Naive thymus-derived CD4-positive, alpha-beta T cell (primary cell): ENCODE measurements at regions of chr9 and their contacts with region 1.

Region 1: DNA sequence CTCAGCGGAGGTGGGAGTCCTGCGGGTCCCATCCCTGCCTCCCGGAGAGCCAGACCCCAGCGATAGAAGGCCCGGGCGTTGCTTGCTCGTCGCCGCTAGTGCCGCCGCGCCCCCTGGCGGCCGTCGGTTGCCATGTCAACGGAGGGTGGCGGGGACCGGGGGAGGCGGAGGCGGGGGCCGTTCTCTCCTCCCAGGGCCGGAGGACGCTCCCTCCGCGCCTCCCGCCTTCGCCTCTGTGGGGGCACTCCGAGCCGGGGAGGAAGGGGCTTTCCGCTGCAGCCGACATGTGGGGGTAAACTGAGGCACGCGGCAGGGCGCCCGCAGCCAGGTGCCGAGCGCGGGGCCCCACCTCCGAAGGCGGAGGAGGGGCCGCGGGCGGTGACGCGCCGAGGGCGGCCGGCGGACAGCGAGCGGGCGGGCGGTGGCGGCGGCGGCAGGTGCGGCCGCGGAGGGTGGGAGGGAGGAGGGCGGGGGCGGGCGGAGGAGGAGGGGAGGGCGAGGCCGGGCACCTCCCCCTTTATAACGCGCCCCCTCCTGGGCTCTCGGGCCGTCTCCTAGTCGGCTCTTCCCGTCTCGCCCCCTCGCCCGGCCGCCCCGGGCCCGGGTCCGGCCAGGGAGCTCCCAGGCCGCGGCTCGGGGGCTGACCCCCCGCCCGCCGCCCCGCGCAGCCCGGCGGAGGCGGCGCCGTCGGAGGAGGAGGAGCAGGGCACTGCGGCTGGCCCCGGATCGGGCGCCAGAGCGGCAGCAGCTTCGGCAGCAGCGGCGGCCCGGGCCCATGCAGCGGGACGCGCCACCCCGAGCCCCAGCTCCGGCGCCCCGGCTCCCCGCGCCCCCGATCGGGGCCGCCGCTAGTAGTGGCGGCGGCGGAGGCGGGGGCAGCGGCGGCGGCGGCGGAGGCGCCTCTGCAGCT is 556 bp upstream of the CDK9 start:
- DNase-seq: peak; percentile 82 to 93 (median 90)
- ATAC-seq: peak; percentile 65
- H3K4me3 ChIP-seq: peak overlapping the region; percentile 53
- H3K4me3 Mint-ChIP-seq: peak overlapping the region; percentile 82 to 95 (median 92)
- H3K27ac ChIP-seq: peak overlapping the region; percentile 90
- H3K27ac Mint-ChIP-seq: peak overlapping the region; percentile 91 to 98 (median 96)
- H3K4me1 ChIP-seq: peaks cover 56 to 59% of the 10 kb centered on the region in 2 donors
- H3K4me1 Mint-ChIP-seq: peaks cover 34 to 75% (median 61%) of the 10 kb centered on the region in 7 donors
- H3K27me3 ChIP-seq: no peaks in the 10 kb centered on the region
- H3K27me3 Mint-ChIP-seq: no peaks in the 10 kb centered on the region

Region 2: GRCh38 chr9:127578955-127579853 is 206.1 kb before region 1 on chr9:
- CTCF ChIA-PET with region 1: no interaction called
- POLR2A ChIA-PET with region 1: no interaction called
- intact Hi-C with region 1: loop called in 1 of 2 experiments (anchors 5 kb)
- DNase-seq: peak in 2 of 9 donors; percentile 43 to 76
- ATAC-seq: peak; percentile 95
- H3K4me3 ChIP-seq: no peak overlapping the region
- H3K4me3 Mint-ChIP-seq: peak overlapping the region in 3 of 10 donors; percentile 24 to 83 (median 44)
- H3K27ac ChIP-seq: no peak overlapping the region
- H3K27ac Mint-ChIP-seq: peak overlapping the region in 3 of 9 donors; percentile 26 to 89 (median 61)
- H3K4me1 ChIP-seq: peaks cover 4 to 7% of the 10 kb centered on the region in 2 donors
- H3K4me1 Mint-ChIP-seq: peaks cover 8 to 54% (median 10%) of the 10 kb centered on the region in 7 donors
- H3K27me3 ChIP-seq: no peaks in the 10 kb centered on the region
- H3K27me3 Mint-ChIP-seq: no peaks in the 10 kb centered on the region

Region 3: GRCh38 chr9:127715394-127716337 is 69.6 kb before region 1 on chr9 and contains the starts of genes PTRH1 and TTC16:
- CTCF ChIA-PET with region 1: no interaction called
- POLR2A ChIA-PET with region 1: interaction called, 4 read pairs
- intact Hi-C with region 1: loop called (anchors 1 kb)
- DNase-seq: peak; percentile 91 to 98 (median 96)
- ATAC-seq: peak; percentile 96
- H3K4me3 ChIP-seq: peak within 1 kb of the TSS; percentile 85
- H3K4me3 Mint-ChIP-seq: peak within 1 kb of the TSS; percentile 93 to 100 (median 98)
- H3K27ac ChIP-seq: peak within 1 kb of the TSS; percentile 89
- H3K27ac Mint-ChIP-seq: peak within 1 kb of the TSS; percentile 86 to 99 (median 97)
- H3K4me1 ChIP-seq: peaks cover 31 to 32% of the 10 kb centered on the region in 2 donors
- H3K4me1 Mint-ChIP-seq: peaks cover 28 to 47% (median 30%) of the 10 kb centered on the region in 7 donors
- H3K27me3 ChIP-seq: no peaks in the 10 kb centered on the region
- H3K27me3 Mint-ChIP-seq: no peaks in the 10 kb centered on the region
- total RNA-seq, gene PTRH1: 7.8 to 9.5 (median 8.6) TPM
- total RNA-seq, gene TTC16: 0.29 to 9.9 (median 4.6) TPM

Region 4: DNA sequence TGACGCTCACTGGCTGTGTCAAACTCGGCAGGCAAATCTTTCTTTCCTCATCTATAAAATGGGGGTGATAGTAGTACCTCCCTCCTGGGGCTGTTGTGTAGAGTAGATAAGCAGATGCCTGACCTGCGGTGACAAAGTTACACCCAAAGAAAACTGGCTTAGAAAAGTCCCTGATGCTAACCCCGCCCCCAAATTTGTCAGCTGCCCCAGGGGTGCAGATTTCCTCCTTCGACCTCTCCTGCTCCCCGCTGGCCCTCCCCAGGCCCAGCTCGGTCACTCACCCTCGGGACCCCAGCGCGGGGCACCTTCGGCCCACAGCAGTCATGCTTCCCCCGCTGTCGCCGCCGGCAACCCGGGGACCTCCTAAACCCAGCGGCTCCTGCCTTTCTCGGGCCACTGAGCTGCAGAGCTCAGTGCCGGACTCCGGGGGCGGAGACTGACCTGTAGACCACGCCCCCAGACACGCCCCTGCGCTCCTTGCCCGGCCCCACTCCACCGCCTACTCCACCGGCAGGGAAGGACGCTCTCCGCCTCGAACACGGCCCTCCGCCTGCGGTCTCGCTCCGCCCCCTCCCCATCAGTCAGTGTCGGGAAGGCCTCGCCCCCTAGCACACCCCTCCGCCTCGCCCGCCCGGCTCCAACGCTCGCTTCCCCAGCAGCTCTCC is 14.2 kb before region 1 on chr9:
- CTCF ChIA-PET with region 1: interaction called, 14 read pairs
- POLR2A ChIA-PET with region 1: interaction called, 99 read pairs
- intact Hi-C with region 1: loop called (anchors 1 kb)
- DNase-seq: peak; percentile 85 to 99 (median 92)
- ATAC-seq: peak; percentile 92
- H3K4me3 ChIP-seq: peak overlapping the region; percentile 71
- H3K4me3 Mint-ChIP-seq: peak overlapping the region; percentile 74 to 92 (median 86)
- H3K27ac ChIP-seq: peak overlapping the region; percentile 90
- H3K27ac Mint-ChIP-seq: peak overlapping the region; percentile 90 to 96 (median 94)
- H3K4me1 ChIP-seq: peaks cover 57 to 59% of the 10 kb centered on the region in 2 donors
- H3K4me1 Mint-ChIP-seq: peaks cover 44 to 82% (median 71%) of the 10 kb centered on the region in 7 donors
- H3K27me3 ChIP-seq: no peaks in the 10 kb centered on the region
- H3K27me3 Mint-ChIP-seq: no peaks in the 10 kb centered on the region

Region 5: GRCh38 chr9:127869310-127870152 is 84.3 kb after region 1 on chr9:
- CTCF ChIA-PET with region 1: interaction called, 14 read pairs
- POLR2A ChIA-PET with region 1: interaction called, 7 read pairs
- intact Hi-C with region 1: loop called (anchors 1 to 2 kb)
- DNase-seq: peak; percentile 44 to 91 (median 62)
- ATAC-seq: peak; percentile 85
- H3K4me3 ChIP-seq: no peak overlapping the region
- H3K4me3 Mint-ChIP-seq: no peak overlapping the region
- H3K27ac ChIP-seq: no peak overlapping the region
- H3K27ac Mint-ChIP-seq: peak overlapping the region in 1 of 9 donors; percentile 32
- H3K4me1 ChIP-seq: peaks cover 12 to 13% of the 10 kb centered on the region in 2 donors
- H3K4me1 Mint-ChIP-seq: peaks cover 12 to 19% (median 16%) of the 10 kb centered on the region in 7 donors
- H3K27me3 ChIP-seq: no peaks in the 10 kb centered on the region
- H3K27me3 Mint-ChIP-seq: no peaks in the 10 kb centered on the region

Region 6: DNA sequence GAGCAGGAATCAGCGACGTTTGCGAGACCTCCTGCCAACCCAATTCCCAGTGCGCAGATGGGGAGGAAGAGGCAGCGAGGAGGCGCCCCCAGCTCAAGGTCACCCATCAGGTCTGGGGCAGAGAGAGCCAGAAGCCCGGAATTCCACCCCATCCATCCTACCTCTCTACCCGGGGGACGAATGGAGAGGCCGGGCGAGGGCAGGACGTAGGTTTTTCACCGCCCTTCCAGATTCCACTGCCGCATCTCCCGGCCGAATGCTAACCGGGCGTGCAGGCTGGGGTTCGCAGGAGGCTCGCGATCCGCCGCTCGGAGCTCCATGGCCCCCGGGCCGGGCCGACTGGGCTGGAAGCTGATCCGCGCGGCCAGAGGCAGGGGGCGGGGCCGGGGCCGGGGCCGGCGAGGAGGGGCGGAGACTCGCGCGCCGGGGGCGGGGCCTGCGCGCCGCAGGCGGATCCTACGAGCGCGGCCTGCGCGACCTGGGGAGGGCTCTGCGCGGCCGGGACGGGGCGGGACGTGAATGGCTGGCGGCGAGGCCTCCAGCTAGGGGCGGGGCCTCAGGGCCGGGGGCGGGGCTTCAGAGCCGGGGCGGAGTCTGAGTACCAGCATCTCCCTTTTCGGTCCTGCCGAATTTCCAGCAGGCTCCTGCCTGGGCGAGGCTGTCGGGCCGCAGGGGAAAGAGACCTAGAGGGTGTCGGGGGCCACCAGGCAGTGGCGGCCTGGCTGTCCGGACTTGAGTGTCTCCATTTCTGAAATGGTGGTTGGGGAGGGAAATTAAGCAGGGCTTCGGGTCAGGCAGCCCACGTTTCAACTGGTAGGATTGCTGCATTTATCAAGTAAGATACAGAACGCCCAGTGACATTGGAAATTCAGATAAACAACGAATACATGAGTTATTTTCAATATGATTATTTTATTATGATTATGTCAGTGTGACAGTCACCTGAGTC is 131.7 kb after region 1 on chr9 and contains the start of gene ST6GALNAC4:
- CTCF ChIA-PET with region 1: interaction called, 7 read pairs
- POLR2A ChIA-PET with region 1: interaction called, 19 read pairs
- intact Hi-C with region 1: loop called (anchors 1 kb)
- DNase-seq: peak; percentile 82 to 97 (median 89)
- ATAC-seq: peak; percentile 98
- H3K4me3 ChIP-seq: peak within 1 kb of the TSS; percentile 86
- H3K4me3 Mint-ChIP-seq: peak within 1 kb of the TSS; percentile 76 to 91 (median 86)
- H3K27ac ChIP-seq: peak within 1 kb of the TSS; percentile 81
- H3K27ac Mint-ChIP-seq: peak within 1 kb of the TSS; percentile 69 to 95 (median 87)
- H3K4me1 ChIP-seq: peaks cover 28 to 39% of the 10 kb centered on the region in 2 donors
- H3K4me1 Mint-ChIP-seq: peaks cover 29 to 64% (median 51%) of the 10 kb centered on the region in 7 donors
- H3K27me3 ChIP-seq: no peaks in the 10 kb centered on the region
- H3K27me3 Mint-ChIP-seq: peaks cover 0 to under 1% (median 0%) of the 10 kb centered on the region in 5 donors
- total RNA-seq, gene ST6GALNAC4: 28.0 to 51.0 (median 36.1) TPM

Region 7: DNA sequence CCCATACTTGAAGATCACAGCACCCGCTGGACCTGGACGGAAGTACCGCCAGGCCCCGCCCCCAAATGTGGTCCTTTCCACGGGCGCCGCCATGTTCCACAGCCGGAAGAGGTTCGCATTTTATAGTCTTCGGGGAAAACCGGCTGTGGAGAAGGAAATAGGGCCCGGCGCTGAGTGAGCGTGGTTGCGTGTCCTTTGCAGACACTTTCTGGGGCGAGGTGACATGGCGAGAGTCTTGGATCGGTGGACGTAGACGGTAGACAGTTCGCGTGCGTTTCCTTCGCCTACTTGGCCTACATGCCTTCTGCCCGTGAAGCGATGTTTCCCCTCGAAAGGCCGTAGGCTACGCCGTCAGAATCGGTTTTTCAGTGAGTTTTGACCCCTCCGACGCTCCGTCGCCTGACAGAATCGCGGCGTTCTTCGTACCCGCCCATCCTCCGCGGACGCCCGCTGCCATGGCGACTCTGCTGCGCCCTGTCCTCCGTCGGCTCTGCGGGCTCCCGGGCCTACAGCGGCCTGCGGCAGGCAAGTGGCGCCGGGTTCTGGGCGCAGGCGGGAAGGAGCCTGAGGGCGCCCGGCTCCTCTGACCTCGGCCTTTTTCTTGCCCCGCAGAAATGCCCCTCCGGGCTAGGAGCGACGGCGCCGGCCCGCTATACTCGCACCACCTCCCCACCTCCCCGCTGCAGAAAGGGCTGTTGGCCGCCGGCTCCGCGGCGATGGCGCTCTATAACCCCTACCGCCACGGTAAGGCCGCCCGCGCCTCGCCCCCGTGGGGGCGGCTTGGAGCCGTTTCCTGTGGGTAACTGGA is 537.3 kb after region 1 on chr9 and contains the starts of genes COQ4 and TRUB2:
- CTCF ChIA-PET with region 1: no interaction called
- POLR2A ChIA-PET with region 1: no interaction called
- intact Hi-C with region 1: loop called in 1 of 2 experiments (anchors 5 kb)
- DNase-seq: peak; percentile 80 to 95 (median 94)
- ATAC-seq: peak; percentile 95
- H3K4me3 ChIP-seq: peak within 1 kb of the TSS; percentile 98
- H3K4me3 Mint-ChIP-seq: peak within 1 kb of the TSS; percentile 82 to 99 (median 96)
- H3K27ac ChIP-seq: peak within 1 kb of the TSS; percentile 85
- H3K27ac Mint-ChIP-seq: peak within 1 kb of the TSS; percentile 95 to 99 (median 98)
- H3K4me1 ChIP-seq: peaks cover 10 to 13% of the 10 kb centered on the region in 2 donors
- H3K4me1 Mint-ChIP-seq: peaks cover 4 to 45% (median 29%) of the 10 kb centered on the region in 7 donors
- H3K27me3 ChIP-seq: no peaks in the 10 kb centered on the region
- H3K27me3 Mint-ChIP-seq: peaks cover 0 to 2% (median 0%) of the 10 kb centered on the region in 5 donors
- total RNA-seq, gene COQ4: 32.9 to 47.2 (median 42.4) TPM
- total RNA-seq, gene TRUB2: 11.5 to 27.2 (median 21.6) TPM